Dendritic cell treated with granulocyte-macrophage colony-stimulating factor and Interleukin-4, amounts not matched to agents 40 ng/mL and 50 ng/mL, for 4 days (primary cell): ENCODE measurements at regions of chr10 and their contacts with region 1.

Region 1: DNA sequence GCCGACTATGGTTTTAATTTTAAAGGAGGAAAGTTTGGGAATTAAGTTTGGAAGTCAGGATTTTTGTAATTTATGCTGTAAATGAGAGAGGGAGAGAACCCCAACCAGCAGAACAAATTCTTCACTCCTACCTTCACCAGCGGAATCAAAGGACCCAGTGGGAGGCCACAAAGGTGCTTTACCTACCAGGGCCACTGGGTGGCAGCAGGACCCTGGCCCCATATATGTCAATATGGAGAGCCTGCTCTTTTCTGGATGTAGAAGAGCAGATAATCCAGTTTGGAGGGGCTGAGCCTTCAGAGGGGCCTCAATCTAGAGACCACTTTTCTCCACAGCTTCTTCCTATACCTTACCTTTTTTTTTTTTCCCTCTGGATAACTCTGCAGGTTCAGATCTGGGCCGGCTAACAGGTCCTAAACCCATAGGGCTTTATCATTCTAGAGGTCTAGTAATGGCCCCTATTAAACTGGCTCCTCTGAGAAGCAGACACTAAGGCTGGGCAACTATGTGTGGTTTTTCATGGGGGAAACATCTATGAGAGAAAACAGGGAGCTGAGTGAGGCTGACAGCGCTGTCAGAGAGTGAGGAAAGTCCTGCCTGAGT is 8.5 kb upstream of the SCD start:
- H3K4me3 Mint-ChIP-seq: no peak overlapping the region
- H3K27ac Mint-ChIP-seq: peak overlapping the region; percentile 84
- H3K4me1 Mint-ChIP-seq: peaks cover 48% of the 10 kb centered on the region
- H3K27me3 Mint-ChIP-seq: peaks cover 14% of the 10 kb centered on the region

Region 2: DNA sequence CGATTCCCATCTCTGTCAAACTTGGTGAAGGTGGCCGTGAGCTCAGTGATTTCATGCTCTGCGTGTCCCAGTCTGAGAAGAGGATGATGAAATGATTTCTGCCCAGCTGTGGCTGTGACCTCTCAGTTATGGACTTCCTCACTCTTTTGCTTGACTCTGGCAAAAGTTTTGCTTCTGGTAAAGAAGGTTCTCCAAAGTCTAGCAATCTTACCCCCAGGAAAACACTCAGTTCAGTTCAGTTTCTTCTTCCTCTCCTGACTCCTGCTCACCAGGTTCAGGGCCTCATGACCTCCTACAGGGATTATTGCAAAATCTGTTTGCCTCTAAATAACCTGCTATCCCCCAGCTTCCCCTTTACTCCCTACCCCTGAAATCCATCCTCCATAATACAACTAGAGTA is 47.2 kb before region 1 on chr10:
- intact Hi-C with region 1: loop called (anchors 5 kb)
- H3K4me3 Mint-ChIP-seq: no peak overlapping the region
- H3K27ac Mint-ChIP-seq: peak overlapping the region; percentile 78
- H3K4me1 Mint-ChIP-seq: peaks cover 49% of the 10 kb centered on the region
- H3K27me3 Mint-ChIP-seq: peaks cover 12% of the 10 kb centered on the region

Region 3: DNA sequence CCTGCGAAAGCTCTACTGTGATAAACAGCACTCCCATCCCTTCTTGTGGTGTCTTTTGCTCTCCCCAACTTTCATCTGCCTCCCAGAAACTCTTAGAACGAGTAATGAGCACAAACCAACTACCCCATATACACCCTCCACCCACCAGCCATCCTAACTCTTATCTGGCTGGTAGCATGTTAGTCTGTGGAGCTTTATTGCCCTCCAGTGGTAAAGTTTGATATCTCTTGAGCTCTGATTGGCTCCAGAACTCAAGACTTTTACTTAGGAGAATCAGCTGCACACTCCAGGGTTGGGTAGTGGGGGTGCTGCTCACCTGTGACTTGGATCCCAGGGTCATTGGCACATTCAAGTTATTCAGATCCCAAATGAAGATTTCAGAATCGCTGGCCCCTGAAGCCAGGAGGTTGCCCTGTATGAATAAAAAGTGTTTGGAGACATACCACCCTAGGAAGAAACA is 170.2 kb after region 1 on chr10:
- intact Hi-C with region 1: loop called (anchors 2 kb)
- H3K4me3 Mint-ChIP-seq: no peak overlapping the region
- H3K27ac Mint-ChIP-seq: no peak overlapping the region
- H3K4me1 Mint-ChIP-seq: peaks cover 9% of the 10 kb centered on the region
- H3K27me3 Mint-ChIP-seq: no peaks in the 10 kb centered on the region